ENCODE measurements at regions of chr5 and their contacts with region 1.

Region 1: DNA sequence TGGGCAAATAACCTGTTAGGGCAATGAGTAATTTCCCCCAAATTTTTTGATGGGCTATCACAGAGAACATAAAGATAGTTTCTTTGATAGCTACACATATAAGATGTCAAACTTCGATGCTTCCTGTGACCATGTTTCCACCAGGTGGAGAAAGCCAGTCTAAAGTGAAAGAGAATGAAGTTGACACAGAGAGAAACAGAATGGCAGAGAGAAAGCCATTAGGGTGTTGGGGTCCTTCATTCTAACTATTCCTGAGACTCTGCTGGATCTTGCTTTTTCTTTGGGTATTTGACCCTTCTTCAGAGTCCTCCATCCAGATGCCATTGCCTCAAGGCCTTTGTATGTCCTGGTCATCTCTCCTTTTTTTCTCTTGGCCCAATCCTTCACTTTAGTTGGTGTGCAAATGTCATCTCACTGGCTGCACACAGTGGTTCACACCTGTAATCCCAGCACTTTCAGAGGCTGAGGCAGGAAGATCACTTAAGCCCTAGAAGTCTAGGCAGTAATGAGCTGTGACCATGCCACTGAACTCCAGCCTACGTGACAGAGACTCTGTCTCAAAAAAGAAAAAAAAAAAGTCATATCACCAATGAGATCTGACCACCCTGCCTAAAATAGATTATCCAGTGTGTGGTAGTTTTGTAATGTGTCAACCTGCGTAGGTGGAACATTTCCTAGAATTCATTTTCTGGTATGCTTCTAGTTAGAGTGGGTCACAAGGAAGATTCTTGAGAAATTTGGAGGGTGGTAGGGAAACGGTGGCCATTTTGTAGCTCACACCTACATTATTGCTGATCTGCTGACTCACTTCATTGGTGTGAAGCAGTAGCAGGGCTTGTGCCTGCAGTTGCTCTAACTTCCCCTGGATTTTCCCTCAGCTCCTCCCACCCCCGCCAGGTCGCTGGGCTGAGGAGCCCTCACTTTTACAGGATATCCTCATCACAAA is 20.8 kb upstream of the KIF2A start:
- DNase-seq: peak; percentile 85
- H3K4me3 Mint-ChIP-seq: peak overlapping the region; percentile 36
- H3K27ac Mint-ChIP-seq: peak overlapping the region; percentile 98
- H3K4me1 Mint-ChIP-seq: peaks cover 72% of the 10 kb centered on the region
- H3K27me3 Mint-ChIP-seq: no peaks in the 10 kb centered on the region

Region 2: GRCh38 chr5:62100201-62100600 is 185.0 kb before region 1 on chr5:
- CTCF ChIA-PET with region 1: no interaction called
- POLR2A ChIA-PET with region 1: no interaction called
- intact Hi-C with region 1: no loop called
- DNase-seq: no peak
- H3K4me3 Mint-ChIP-seq: no peak overlapping the region
- H3K27ac Mint-ChIP-seq: no peak overlapping the region
- H3K4me1 Mint-ChIP-seq: no peaks in the 10 kb centered on the region
- H3K27me3 Mint-ChIP-seq: peaks cover 3% of the 10 kb centered on the region

Region 3: GRCh38 chr5:62231576-62231975 is 53.6 kb before region 1 on chr5:
- CTCF ChIA-PET with region 1: no interaction called
- POLR2A ChIA-PET with region 1: interaction called, 6 read pairs
- intact Hi-C with region 1: loop called (anchors 1 kb)
- DNase-seq: no peak
- H3K4me3 Mint-ChIP-seq: no peak overlapping the region
- H3K27ac Mint-ChIP-seq: no peak overlapping the region
- H3K4me1 Mint-ChIP-seq: peaks cover 13% of the 10 kb centered on the region
- H3K27me3 Mint-ChIP-seq: peaks cover 4% of the 10 kb centered on the region

Region 4: GRCh38 chr5:62256161-62257019 is 28.8 kb before region 1 on chr5:
- CTCF ChIA-PET with region 1: no interaction called
- POLR2A ChIA-PET with region 1: no interaction called
- intact Hi-C with region 1: loop called (anchors 1 kb)
- DNase-seq: peak; percentile 26
- H3K4me3 Mint-ChIP-seq: peak overlapping the region; percentile 17
- H3K27ac Mint-ChIP-seq: peak overlapping the region; percentile 74
- H3K4me1 Mint-ChIP-seq: peaks cover 54% of the 10 kb centered on the region
- H3K27me3 Mint-ChIP-seq: no peaks in the 10 kb centered on the region

Region 5: DNA sequence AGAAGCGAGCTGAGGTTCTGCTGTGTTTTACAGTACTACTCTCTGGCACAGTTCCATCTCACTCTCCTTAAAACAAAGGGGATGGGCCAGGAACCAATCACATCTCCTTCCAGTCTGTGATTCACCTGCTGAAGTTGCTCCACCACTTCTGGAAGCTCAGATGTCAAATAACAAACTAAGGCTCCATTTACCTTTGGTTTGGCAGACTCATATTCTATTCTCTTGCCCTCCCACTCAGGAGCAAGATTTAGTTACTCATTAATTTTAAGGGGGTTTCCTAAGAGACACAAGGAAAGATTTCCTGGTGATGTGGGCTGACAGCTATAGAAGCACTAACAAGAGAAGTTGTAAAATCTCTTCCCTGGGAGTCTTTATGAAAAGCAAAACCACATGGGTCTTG is 17.0 kb before region 1 on chr5:
- CTCF ChIA-PET with region 1: interaction called, 3 read pairs
- POLR2A ChIA-PET with region 1: interaction called, 8 read pairs
- intact Hi-C with region 1: loop called (anchors 1 kb)
- DNase-seq: no peak
- H3K4me3 Mint-ChIP-seq: no peak overlapping the region
- H3K27ac Mint-ChIP-seq: peak overlapping the region; percentile 15
- H3K4me1 Mint-ChIP-seq: peaks cover 17% of the 10 kb centered on the region
- H3K27me3 Mint-ChIP-seq: no peaks in the 10 kb centered on the region

Region 6: GRCh38 chr5:62328772-62329491 is 43.7 kb after region 1 on chr5:
- CTCF ChIA-PET with region 1: interaction called, 4 read pairs
- POLR2A ChIA-PET with region 1: interaction called, 6 read pairs
- intact Hi-C with region 1: loop called (anchors 2 kb)
- DNase-seq: no peak
- H3K4me3 Mint-ChIP-seq: no peak overlapping the region
- H3K27ac Mint-ChIP-seq: peak overlapping the region; percentile 70
- H3K4me1 Mint-ChIP-seq: peaks cover 83% of the 10 kb centered on the region
- H3K27me3 Mint-ChIP-seq: no peaks in the 10 kb centered on the region

Region 7: DNA sequence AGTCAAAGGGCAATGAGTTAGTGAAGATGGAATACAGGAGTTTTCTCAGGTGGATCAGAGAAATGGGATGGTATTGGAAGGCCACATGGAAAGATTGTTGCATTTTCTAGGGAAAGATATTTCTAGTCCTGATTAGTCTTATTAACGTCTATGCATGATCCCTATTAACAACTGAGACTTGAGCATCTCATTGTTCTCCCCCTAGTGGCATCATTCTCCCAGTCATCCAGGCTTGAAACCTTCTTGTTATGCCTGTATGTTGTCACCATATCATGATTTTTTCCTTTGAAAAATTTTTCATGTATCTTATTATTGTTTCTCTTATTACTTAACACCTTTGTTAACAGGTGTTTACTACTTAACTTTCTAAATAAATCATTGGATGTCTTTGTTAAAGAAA is 55.2 kb after region 1 on chr5:
- CTCF ChIA-PET with region 1: no interaction called
- POLR2A ChIA-PET with region 1: interaction called, 3 read pairs
- intact Hi-C with region 1: loop called (anchors 1 kb)
- DNase-seq: no peak
- H3K4me3 Mint-ChIP-seq: no peak overlapping the region
- H3K27ac Mint-ChIP-seq: no peak overlapping the region
- H3K4me1 Mint-ChIP-seq: peaks cover 66% of the 10 kb centered on the region
- H3K27me3 Mint-ChIP-seq: no peaks in the 10 kb centered on the region

Region 8: GRCh38 chr5:62403434-62404250 is 118.4 kb after region 1 on chr5 and contains the start of gene DIMT1:
- CTCF ChIA-PET with region 1: interaction called, 4 read pairs
- POLR2A ChIA-PET with region 1: interaction called, 5 read pairs
- intact Hi-C with region 1: loop called (anchors 2 kb)
- DNase-seq: peak; percentile 97
- H3K4me3 Mint-ChIP-seq: peak within 1 kb of the TSS; percentile 100
- H3K27ac Mint-ChIP-seq: peak within 1 kb of the TSS; percentile 93
- H3K4me1 Mint-ChIP-seq: peaks cover 29% of the 10 kb centered on the region
- H3K27me3 Mint-ChIP-seq: no peaks in the 10 kb centered on the region
- total RNA-seq, gene DIMT1: 46.9 to 48.9 TPM

Measured in activated CD4-positive, alpha-beta memory T cell treated with anti-CD3 and anti-CD28 coated beads for 36 hours (primary cell).